MCF 10A (cell line): ENCODE measurements at regions of chrX and their contacts with region 1.

Region 1: DNA sequence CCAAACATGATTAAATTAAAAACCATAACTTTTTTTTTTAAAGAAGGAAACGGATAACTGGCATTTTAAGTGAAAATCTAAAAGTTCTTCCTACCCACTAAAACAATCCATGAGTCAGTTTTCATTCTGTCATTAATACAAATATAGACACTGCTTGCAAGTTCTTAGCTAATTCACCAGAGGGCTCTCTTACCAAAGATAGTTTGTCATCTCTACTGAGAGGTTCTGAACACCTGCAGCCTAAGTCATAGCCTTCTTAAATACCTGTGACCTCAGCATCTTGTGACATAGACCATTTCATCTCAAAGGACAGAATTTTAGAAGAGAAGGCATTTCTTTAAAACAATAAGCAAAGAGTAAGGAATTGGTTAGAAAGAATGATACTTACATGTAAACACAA is 65.3 kb upstream of the FAM120C start:
- DNase-seq: peak; percentile 35
- H3K4me3 Mint-ChIP-seq: no peak overlapping the region
- H3K27ac Mint-ChIP-seq: no peak overlapping the region
- H3K4me1 Mint-ChIP-seq: no peaks in the 10 kb centered on the region
- H3K27me3 Mint-ChIP-seq: peaks cover 80% of the 10 kb centered on the region
- CTCF ChIP-seq: peak; percentile 40

Region 2: GRCh38 chrX:53357799-53358530 is 890.3 kb before region 1 on chrX:
- CTCF ChIA-PET with region 1: no interaction called
- POLR2A ChIA-PET with region 1: no interaction called
- intact Hi-C with region 1: no loop called
- DNase-seq: no peak
- H3K4me3 Mint-ChIP-seq: no peak overlapping the region
- H3K27ac Mint-ChIP-seq: no peak overlapping the region
- H3K4me1 Mint-ChIP-seq: no peaks in the 10 kb centered on the region
- H3K27me3 Mint-ChIP-seq: peaks cover 61% of the 10 kb centered on the region
- CTCF ChIP-seq: no peak

Region 3: GRCh38 chrX:53738370-53738906 is 509.9 kb before region 1 on chrX:
- CTCF ChIA-PET with region 1: no interaction called
- POLR2A ChIA-PET with region 1: no interaction called
- intact Hi-C with region 1: no loop called
- DNase-seq: no peak
- H3K4me3 Mint-ChIP-seq: no peak overlapping the region
- H3K27ac Mint-ChIP-seq: no peak overlapping the region
- H3K4me1 Mint-ChIP-seq: no peaks in the 10 kb centered on the region
- H3K27me3 Mint-ChIP-seq: peaks cover 74% of the 10 kb centered on the region
- CTCF ChIP-seq: no peak

Region 4: DNA sequence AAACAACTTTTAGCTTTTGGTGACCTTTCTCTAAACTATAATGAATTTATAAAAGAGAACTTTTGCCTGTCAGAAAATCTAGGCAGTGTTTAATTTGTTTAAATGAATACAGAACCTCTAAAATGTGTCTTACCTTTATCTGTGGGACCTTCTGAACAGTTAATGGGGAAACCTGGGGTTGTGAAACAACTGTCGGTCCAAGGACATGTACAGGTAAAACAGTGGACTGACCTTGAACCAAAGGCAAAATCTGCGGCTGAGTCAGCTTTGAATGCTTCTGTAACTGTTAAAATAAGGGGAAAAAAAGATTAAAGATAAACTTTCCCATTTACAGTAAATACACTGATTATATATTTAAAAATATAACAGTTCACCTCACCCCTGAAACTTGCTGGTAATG is 44.4 kb after region 1 on chrX:
- CTCF ChIA-PET with region 1: no interaction called
- POLR2A ChIA-PET with region 1: no interaction called
- intact Hi-C with region 1: no loop called
- DNase-seq: no peak
- H3K4me3 Mint-ChIP-seq: no peak overlapping the region
- H3K27ac Mint-ChIP-seq: no peak overlapping the region
- H3K4me1 Mint-ChIP-seq: no peaks in the 10 kb centered on the region
- H3K27me3 Mint-ChIP-seq: peaks cover 81% of the 10 kb centered on the region
- CTCF ChIP-seq: no peak

Region 5: GRCh38 chrX:54439967-54440871 is 191.9 kb after region 1 on chrX and contains the start of gene TSR2:
- CTCF ChIA-PET with region 1: interaction called, 4 read pairs
- POLR2A ChIA-PET with region 1: no interaction called
- intact Hi-C with region 1: loop called (anchors 1 kb)
- DNase-seq: peak; percentile 82
- H3K4me3 Mint-ChIP-seq: peak within 1 kb of the TSS; percentile 89
- H3K27ac Mint-ChIP-seq: peak within 1 kb of the TSS; percentile 24
- H3K4me1 Mint-ChIP-seq: peaks cover 6% of the 10 kb centered on the region
- H3K27me3 Mint-ChIP-seq: peaks cover 41% of the 10 kb centered on the region
- CTCF ChIP-seq: no peak
- total RNA-seq, gene TSR2: 30.3 and 33.3 TPM in 2 replicates